ENCODE measurements at regions of chr4 and their contacts with region 1.

Region 1: GRCh38 chr4:76744241-76744921 is 153.6 kb downstream of the SOWAHB start:
- DNase-seq: no peak
- CTCF ChIP-seq: no peak

Region 2: GRCh38 chr4:76758290-76758882 is 14.0 kb after region 1 on chr4:
- CTCF ChIA-PET with region 1: interaction called, 23 read pairs
- POLR2A ChIA-PET with region 1: no interaction called
- DNase-seq: peak; percentile 44
- CTCF ChIP-seq: peak; percentile 60

Region 3: DNA sequence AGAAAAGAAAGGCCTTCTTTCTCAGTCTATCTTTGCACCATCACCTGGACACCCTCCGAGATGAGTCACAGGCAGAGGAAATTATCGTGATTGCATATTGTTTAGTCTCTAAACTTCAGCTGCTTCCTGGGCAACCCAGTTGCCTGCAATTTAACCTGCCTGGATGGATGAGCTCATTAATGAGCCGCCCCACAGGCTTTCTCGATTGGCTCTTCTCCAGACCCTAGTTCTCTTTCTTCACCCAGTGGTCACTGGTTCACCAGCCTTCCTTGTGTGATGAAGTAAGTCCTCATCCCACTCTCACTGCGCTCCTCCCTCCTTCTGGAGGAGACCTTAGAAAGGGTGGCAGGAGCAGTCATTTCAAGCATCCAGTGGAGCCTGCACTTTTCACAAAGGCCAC is 59.1 kb after region 1 on chr4:
- CTCF ChIA-PET with region 1: no interaction called
- POLR2A ChIA-PET with region 1: no interaction called
- DNase-seq: no peak
- CTCF ChIP-seq: no peak

Measured in GM10248 (cell line).